Transverse colon (tissue), 4 donors: ENCODE measurements at regions of chr9 and their contacts with region 1.

Region 1: DNA sequence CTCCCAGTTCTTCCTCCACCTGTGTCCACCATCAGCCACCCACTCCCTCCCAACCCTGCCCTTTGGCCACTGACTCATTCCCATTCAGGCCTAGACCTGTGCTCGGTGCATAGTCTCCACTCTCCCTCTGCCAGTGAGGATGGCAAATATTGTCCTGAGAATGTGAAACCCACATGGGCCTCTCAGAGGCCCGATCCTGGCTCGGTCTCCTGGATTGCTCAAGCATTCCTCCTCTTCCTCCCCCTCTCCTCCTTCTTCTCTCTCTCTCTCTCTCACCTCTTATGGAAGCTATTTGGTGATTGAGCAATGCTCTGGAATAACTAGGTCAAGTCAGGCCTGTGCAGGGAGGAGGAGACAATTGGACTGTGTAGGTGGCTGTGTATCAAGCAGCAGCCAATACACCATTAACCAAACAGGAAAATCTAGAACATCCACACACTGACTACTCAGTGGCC is 99.9 kb downstream of the KLF4 start:
- DNase-seq: peak; percentile 22
- H3K4me3 ChIP-seq: no peak overlapping the region
- H3K27ac ChIP-seq: peak overlapping the region in 2 of 4 donors; percentile 35 to 53
- H3K4me1 ChIP-seq: peaks cover 0 to 4% (median 0%) of the 10 kb centered on the region in 4 donors
- H3K27me3 ChIP-seq: no peaks in the 10 kb centered on the region
- CTCF ChIP-seq: no peak
- EP300 ChIP-seq: no peak
- POLR2A ChIP-seq: no peak

Region 2: GRCh38 chr9:107351382-107352045 is 38.1 kb before region 1 on chr9:
- in situ Hi-C with region 1: no loop called
- intact Hi-C with region 1: no loop called
- DNase-seq: no peak
- H3K4me3 ChIP-seq: no peak overlapping the region
- H3K27ac ChIP-seq: no peak overlapping the region
- H3K4me1 ChIP-seq: no peaks in the 10 kb centered on the region
- H3K27me3 ChIP-seq: no peaks in the 10 kb centered on the region
- CTCF ChIP-seq: no peak
- EP300 ChIP-seq: no peak
- POLR2A ChIP-seq: no peak

Region 3: GRCh38 chr9:107439991-107440456 is 50.4 kb after region 1 on chr9:
- in situ Hi-C with region 1: no loop called
- intact Hi-C with region 1: loop called (anchors 5 kb)
- DNase-seq: no peak
- H3K4me3 ChIP-seq: no peak overlapping the region
- H3K27ac ChIP-seq: no peak overlapping the region
- H3K4me1 ChIP-seq: no peaks in the 10 kb centered on the region
- H3K27me3 ChIP-seq: no peaks in the 10 kb centered on the region
- CTCF ChIP-seq: no peak
- EP300 ChIP-seq: no peak
- POLR2A ChIP-seq: no peak